ENCODE measurements at regions of chr7 and their contacts with region 1.

Region 1: GRCh38 chr7:27709137-27710075 is 30.6 kb upstream of the TAX1BP1 start:
- DNase-seq: no peak
- ATAC-seq: no peak
- H3K4me3 Mint-ChIP-seq: no peak overlapping the region
- H3K27ac Mint-ChIP-seq: no peak overlapping the region
- H3K4me1 Mint-ChIP-seq: peaks cover 5% of the 10 kb centered on the region
- H3K27me3 Mint-ChIP-seq: peaks cover 10% of the 10 kb centered on the region
- CTCF ChIP-seq: no peak

Region 2: DNA sequence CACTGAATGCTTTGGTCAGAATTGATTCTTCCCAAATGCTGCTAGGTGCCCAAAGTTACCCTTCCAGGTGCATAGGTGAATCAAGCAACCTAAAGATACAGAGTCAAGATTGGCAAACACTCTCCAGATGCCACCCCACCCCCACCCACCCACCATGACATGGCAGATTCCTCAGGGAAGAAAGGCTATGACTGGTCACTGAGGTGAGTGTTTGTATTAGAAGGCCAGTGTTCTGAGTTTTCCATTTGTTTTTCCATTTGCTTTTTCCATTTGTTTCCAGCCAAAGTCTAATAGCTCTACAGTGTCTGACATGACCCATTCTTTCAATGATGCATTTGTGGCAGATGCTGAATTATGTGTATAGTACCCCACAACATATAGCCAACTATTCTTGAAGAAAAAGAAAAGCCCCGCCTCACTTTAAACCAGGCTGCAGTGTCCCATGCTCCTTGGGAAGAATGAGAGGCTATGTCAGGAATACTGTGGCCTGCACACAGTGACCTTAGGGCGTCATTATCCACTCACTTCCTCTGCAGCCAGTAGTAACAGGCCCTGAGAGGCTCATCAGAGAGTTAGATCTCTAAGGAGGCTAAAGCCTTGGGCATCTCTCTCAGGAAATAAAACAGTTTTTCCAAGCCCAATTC is 30.7 kb before region 1 on chr7:
- CTCF ChIA-PET with region 1: interaction called, 3 read pairs
- POLR2A ChIA-PET with region 1: no interaction called
- intact Hi-C with region 1: loop called (anchors 1 kb)
- DNase-seq: no peak
- ATAC-seq: no peak
- H3K4me3 Mint-ChIP-seq: no peak overlapping the region
- H3K27ac Mint-ChIP-seq: no peak overlapping the region
- H3K4me1 Mint-ChIP-seq: no peaks in the 10 kb centered on the region
- H3K27me3 Mint-ChIP-seq: no peaks in the 10 kb centered on the region
- CTCF ChIP-seq: no peak

Region 3: GRCh38 chr7:27976531-27976930 is 267.1 kb after region 1 on chr7:
- CTCF ChIA-PET with region 1: no interaction called
- POLR2A ChIA-PET with region 1: no interaction called
- intact Hi-C with region 1: no loop called
- DNase-seq: no peak
- ATAC-seq: no peak
- H3K4me3 Mint-ChIP-seq: no peak overlapping the region
- H3K27ac Mint-ChIP-seq: no peak overlapping the region
- H3K4me1 Mint-ChIP-seq: peaks cover 39% of the 10 kb centered on the region
- H3K27me3 Mint-ChIP-seq: no peaks in the 10 kb centered on the region
- CTCF ChIP-seq: no peak

Measured in activated B cell treated with CpG ODN at 0.5 μM for 24 hours (primary cell).